PC-9 (cell line): ENCODE measurements at regions of chrX and their contacts with region 1.

Region 1: DNA sequence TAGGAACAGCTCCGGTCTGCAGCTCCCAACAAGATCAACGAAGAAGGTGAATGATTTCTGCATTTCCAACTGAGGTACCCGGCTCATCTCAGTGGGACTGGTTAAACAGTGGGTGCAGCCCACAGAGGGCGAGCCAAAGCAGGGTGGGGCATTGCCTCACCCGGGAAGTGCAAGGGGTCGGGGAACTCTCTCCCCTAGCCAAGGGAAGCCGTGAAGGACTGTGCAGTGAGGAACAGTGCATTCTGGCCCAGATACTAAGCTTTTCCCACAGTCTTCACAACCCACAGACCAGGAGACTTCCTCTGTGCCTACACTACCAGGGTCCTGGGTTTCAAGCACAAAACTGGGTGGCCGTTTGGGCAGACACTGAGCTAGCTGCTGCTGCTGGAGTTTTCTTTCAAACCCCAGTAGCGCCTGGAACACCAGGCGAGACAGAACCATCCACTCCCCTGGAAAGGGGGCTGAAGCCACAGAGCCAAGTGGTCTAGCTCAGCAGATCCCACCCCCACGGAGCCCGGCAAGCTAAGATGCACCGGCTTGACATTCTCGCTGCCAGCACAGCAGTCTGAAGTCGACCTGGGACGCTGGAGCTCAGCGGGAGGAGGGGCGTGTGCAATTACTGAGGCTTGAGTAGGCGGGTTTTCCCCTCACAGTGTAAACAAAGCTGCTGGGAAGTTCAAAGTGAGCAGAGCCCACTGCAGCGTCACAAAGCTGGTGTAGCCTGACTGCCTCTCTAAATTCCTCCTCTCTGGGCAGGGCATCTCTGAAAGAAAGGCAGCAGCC is 84.6 kb downstream of the THOC2 start:
- DNase-seq: no peak
- H3K4me3 ChIP-seq: no peak overlapping the region
- H3K27ac ChIP-seq: no peak overlapping the region
- H3K4me1 ChIP-seq: no peaks in the 10 kb centered on the region
- H3K27me3 ChIP-seq: no peaks in the 10 kb centered on the region
- CTCF ChIP-seq: no peak

Region 2: DNA sequence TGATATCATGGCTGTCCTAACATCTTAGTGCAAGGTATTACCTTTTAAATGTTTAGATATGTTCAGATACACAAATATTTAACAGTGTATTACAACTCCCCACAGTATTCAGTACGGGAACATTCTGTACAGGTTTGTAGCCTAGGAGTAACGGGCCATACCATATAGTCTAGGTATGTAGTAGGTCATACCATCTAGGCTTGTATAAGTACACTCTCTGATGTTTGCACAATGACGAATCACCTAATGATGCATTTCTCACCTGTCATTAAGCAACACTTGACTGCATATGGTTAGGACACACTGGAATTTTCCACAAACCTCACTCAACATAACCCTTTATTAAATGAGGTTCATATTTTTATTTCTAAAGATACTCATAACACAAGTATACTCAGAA is 17.0 kb after region 1 on chrX:
- CTCF ChIA-PET with region 1: no interaction called
- POLR2A ChIA-PET with region 1: no interaction called
- intact Hi-C with region 1: no loop called
- DNase-seq: peak in 1 of 2 experiments; percentile 96
- H3K4me3 ChIP-seq: no peak overlapping the region
- H3K27ac ChIP-seq: peak overlapping the region; percentile 71
- H3K4me1 ChIP-seq: peaks cover 25% of the 10 kb centered on the region
- H3K27me3 ChIP-seq: no peaks in the 10 kb centered on the region
- CTCF ChIP-seq: no peak

Region 3: GRCh38 chrX:123771449-123772064 is 123.3 kb after region 1 on chrX:
- CTCF ChIA-PET with region 1: interaction called, 19 read pairs
- POLR2A ChIA-PET with region 1: no interaction called
- intact Hi-C with region 1: no loop called
- DNase-seq: no peak
- H3K4me3 ChIP-seq: no peak overlapping the region
- H3K27ac ChIP-seq: no peak overlapping the region
- H3K4me1 ChIP-seq: no peaks in the 10 kb centered on the region
- H3K27me3 ChIP-seq: no peaks in the 10 kb centered on the region
- CTCF ChIP-seq: no peak